Right ventricle myocardium inferior (tissue), 1 donor: ENCODE measurements at regions of chr4 and their contacts with region 1.

Region 1: GRCh38 chr4:168183717-168184608 is 91.6 kb downstream of the ANXA10 start:
- DNase-seq: no peak
- ATAC-seq: peak; percentile 59

Region 2: GRCh38 chr4:169010125-169011023 is 826.4 kb after region 1 on chr4 and contains the start of gene CBR4:
- intact Hi-C with region 1: loop called (anchors 10 kb)
- DNase-seq: peak; percentile 100
- ATAC-seq: peak; percentile 99
- total RNA-seq, gene CBR4: 19.4 TPM